CD8-positive, alpha-beta T cell (primary cell): ENCODE measurements at regions of chr15 and their contacts with region 1.

Region 1: DNA sequence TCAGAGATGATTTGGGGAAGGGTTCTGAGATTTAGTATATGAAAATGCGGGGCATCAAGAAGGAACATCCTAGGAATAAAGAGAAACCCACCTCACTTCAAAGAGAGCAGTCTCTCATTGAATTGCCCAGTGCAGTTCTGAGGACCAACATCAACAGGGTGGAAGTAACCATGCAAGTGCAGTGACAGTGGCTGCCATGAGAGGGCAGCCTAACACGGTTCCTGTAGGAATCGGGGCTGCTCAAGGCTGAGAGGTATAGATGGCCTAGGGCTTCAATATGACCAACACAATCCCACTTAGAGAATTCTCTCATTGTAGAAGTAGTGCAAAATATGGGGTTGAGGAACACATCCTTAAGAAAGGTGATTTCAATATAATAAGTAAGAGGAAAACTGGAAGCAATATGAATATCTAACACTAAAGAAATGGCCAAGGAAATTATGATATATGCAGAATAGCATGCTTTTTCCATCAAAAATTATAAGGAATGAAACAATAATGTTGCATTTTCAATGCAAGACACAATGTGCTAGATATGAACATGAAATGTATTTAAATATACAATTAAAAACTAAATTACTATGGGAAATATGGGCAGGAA is 51.1 kb upstream of the ARRDC4 start:
- DNase-seq: peak; percentile 29 to 68 (median 53)
- ATAC-seq: peak; percentile 46
- H3K4me3 ChIP-seq: no peak overlapping the region
- H3K4me3 Mint-ChIP-seq: no peak overlapping the region
- H3K27ac ChIP-seq: no peak overlapping the region
- H3K27ac Mint-ChIP-seq: no peak overlapping the region
- H3K4me1 ChIP-seq: no peaks in the 10 kb centered on the region
- H3K4me1 Mint-ChIP-seq: peaks cover under 1% of the 10 kb centered on the region
- H3K27me3 ChIP-seq: no peaks in the 10 kb centered on the region
- H3K27me3 Mint-ChIP-seq: peaks cover 4% of the 10 kb centered on the region
- CTCF ChIP-seq: peak; percentile 71

Region 2: DNA sequence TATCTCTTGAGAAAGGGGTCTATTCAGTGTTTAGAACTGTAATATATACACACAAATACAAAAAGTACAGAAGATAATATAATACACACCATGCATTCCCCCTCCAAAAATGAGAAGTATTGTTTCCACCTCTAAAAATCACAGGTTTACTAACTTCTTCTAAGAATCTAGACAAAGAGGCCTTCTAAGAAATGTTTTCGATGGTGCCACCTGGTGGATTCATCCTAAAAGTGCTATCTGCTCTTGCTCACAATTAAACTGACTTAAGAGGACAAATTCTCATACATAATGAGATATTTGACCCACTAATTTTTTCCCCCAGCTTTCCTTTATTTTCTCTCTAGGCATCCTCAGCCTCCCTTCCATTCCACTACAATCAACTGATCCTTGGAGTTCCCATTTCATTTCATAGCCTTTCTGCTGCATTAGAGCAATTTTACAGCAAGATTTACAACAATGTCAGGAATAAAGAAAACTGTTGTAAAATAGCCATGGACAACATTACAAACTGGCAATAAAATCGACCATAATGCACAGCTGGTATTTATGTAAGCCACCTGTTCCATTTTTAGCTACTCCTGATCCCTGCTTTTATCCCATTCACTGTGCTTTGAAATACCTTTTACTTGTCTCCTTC is 175.7 kb after region 1 on chr15:
- CTCF ChIA-PET with region 1: interaction called, 7 read pairs
- POLR2A ChIA-PET with region 1: no interaction called
- intact Hi-C with region 1: loop called (anchors 1 kb)
- DNase-seq: peak in 5 of 9 experiments; percentile 22 to 57 (median 26)
- ATAC-seq: no peak
- H3K4me3 ChIP-seq: no peak overlapping the region
- H3K4me3 Mint-ChIP-seq: no peak overlapping the region
- H3K27ac ChIP-seq: no peak overlapping the region
- H3K27ac Mint-ChIP-seq: no peak overlapping the region
- H3K4me1 ChIP-seq: no peaks in the 10 kb centered on the region
- H3K4me1 Mint-ChIP-seq: no peaks in the 10 kb centered on the region
- H3K27me3 ChIP-seq: no peaks in the 10 kb centered on the region
- H3K27me3 Mint-ChIP-seq: no peaks in the 10 kb centered on the region
- CTCF ChIP-seq: peak; percentile 67

Region 3: DNA sequence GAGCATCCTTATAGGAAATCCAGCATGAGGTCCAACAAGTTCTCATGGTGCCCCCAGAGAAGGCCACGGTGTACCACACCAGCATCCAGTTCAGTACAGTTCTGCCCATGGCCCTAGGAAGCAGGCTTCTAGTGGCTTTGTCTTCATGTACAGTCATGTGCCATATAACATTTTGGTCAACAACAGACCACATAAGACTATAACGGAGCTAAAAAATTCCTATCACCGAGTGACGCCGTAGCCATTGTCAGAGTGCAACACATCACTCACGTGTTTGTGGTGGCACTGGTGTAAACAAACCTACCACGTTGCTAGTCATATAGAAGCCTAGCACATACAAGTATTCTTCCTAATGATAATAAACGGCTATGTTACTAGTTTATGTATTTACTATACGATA is 260.2 kb after region 1 on chr15:
- CTCF ChIA-PET with region 1: no interaction called
- POLR2A ChIA-PET with region 1: no interaction called
- intact Hi-C with region 1: loop called in 1 of 2 experiments (anchors 5 kb)
- DNase-seq: peak in 3 of 9 experiments; percentile 11 to 68 (median 52)
- ATAC-seq: no peak
- H3K4me3 ChIP-seq: no peak overlapping the region
- H3K4me3 Mint-ChIP-seq: no peak overlapping the region
- H3K27ac ChIP-seq: no peak overlapping the region
- H3K27ac Mint-ChIP-seq: no peak overlapping the region
- H3K4me1 ChIP-seq: no peaks in the 10 kb centered on the region
- H3K4me1 Mint-ChIP-seq: no peaks in the 10 kb centered on the region
- H3K27me3 ChIP-seq: no peaks in the 10 kb centered on the region
- H3K27me3 Mint-ChIP-seq: peaks cover 5% of the 10 kb centered on the region
- CTCF ChIP-seq: no peak

Region 4: GRCh38 chr15:98421419-98422129 is 512.2 kb after region 1 on chr15:
- CTCF ChIA-PET with region 1: interaction called, 4 read pairs
- POLR2A ChIA-PET with region 1: no interaction called
- intact Hi-C with region 1: loop called (anchors 2 to 5 kb)
- DNase-seq: peak; percentile 10 to 76 (median 57)
- ATAC-seq: no peak
- H3K4me3 ChIP-seq: peak overlapping the region; percentile 15 to 39
- H3K4me3 Mint-ChIP-seq: no peak overlapping the region
- H3K27ac ChIP-seq: no peak overlapping the region
- H3K27ac Mint-ChIP-seq: no peak overlapping the region
- H3K4me1 ChIP-seq: peaks cover 14% of the 10 kb centered on the region
- H3K4me1 Mint-ChIP-seq: peaks cover 5% of the 10 kb centered on the region
- H3K27me3 ChIP-seq: peaks cover 5 to 11% of the 10 kb centered on the region in 2 experiments
- H3K27me3 Mint-ChIP-seq: peaks cover 40% of the 10 kb centered on the region
- CTCF ChIP-seq: peak; percentile 96

Region 5: DNA sequence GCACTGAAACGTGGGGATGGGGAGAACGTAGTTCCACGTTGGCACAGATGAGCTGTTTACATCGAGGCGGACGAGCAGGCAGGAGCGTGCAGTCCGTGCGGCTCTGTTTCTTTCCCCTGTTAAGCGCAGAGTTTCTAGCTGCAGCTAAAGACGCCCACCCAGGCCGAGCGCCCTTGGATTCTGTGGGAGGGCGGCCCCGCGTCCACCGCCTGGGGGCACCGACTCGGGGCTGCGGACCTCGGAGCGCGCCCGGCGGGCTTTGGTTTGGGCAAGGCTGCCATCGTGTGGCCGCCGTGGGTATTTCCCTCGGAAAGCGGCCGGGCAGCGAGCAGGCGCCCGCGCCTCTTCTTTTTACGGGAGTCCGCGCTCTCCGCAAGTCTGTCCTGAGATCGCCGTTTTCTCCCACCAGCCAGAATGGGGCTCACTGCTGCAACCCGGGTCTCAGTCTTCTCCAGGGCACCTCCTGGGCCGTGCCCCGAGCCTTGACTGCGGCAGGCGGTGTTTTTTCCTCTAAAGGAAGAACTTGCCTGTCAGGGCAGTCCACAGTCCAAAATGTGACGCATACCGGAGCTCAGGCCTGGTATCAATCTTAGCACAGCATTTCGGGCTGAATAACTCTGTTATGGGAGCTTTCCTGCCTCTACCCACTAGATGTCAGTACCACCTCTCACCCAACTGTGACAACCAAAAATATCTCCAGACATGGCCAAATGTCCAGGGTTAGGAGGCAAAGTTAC is 519.0 kb after region 1 on chr15:
- CTCF ChIA-PET with region 1: interaction called, 5 read pairs
- POLR2A ChIA-PET with region 1: no interaction called
- intact Hi-C with region 1: loop called (anchors 2 to 5 kb)
- DNase-seq: peak in 8 of 9 experiments; percentile 18 to 77 (median 56)
- ATAC-seq: peak; percentile 42
- H3K4me3 ChIP-seq: peak overlapping the region; percentile 3 to 17
- H3K4me3 Mint-ChIP-seq: peak overlapping the region; percentile 45
- H3K27ac ChIP-seq: no peak overlapping the region
- H3K27ac Mint-ChIP-seq: no peak overlapping the region
- H3K4me1 ChIP-seq: peaks cover 6% of the 10 kb centered on the region
- H3K4me1 Mint-ChIP-seq: peaks cover 7% of the 10 kb centered on the region
- H3K27me3 ChIP-seq: peaks cover 7 to 9% of the 10 kb centered on the region in 2 experiments
- H3K27me3 Mint-ChIP-seq: peaks cover 53% of the 10 kb centered on the region
- CTCF ChIP-seq: peak; percentile 86